CD8-positive, alpha-beta T cell (primary cell): ENCODE measurements at regions of chr6 and their contacts with region 1.

Region 1: GRCh38 chr6:114785235-114786127 is 442.7 kb upstream of the HS3ST5 start:
- DNase-seq: no peak
- ATAC-seq: no peak
- H3K4me3 ChIP-seq: no peak overlapping the region
- H3K4me3 Mint-ChIP-seq: no peak overlapping the region
- H3K27ac ChIP-seq: no peak overlapping the region
- H3K27ac Mint-ChIP-seq: no peak overlapping the region
- H3K4me1 ChIP-seq: no peaks in the 10 kb centered on the region
- H3K4me1 Mint-ChIP-seq: no peaks in the 10 kb centered on the region
- H3K27me3 ChIP-seq: no peaks in the 10 kb centered on the region
- H3K27me3 Mint-ChIP-seq: no peaks in the 10 kb centered on the region
- CTCF ChIP-seq: no peak

Region 2: DNA sequence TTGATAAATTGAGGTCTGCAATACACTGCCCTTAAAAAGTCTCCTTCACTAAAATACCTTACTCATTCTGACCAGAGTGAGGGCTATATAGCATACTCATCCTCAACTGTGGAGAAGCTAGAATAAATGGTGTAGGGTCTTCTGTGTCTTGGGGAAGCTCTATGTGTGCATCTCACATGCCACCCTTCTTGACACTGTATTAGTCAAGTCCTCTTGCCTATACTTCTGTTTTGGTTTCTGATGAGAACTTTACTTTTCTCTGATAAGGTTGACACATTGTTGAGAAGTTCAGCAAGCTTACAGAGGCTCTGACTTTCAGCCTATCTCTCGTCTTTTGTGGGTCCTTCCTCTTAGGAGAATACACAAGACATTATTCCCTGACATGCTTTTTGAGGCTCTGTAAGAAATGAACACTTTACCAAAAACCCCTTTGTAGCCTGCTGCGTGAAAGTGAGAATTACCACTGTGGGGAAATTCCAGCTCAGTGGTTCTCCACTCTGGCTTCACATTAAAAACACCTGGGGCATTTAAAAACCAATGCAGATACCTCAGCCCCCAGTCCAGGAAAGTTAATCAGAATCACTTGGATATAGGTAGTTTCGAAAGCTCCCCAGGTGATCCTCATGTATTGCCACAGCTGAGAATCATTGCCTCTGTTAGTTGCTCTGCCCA is 70.5 kb before region 1 on chr6:
- CTCF ChIA-PET with region 1: no interaction called
- POLR2A ChIA-PET with region 1: no interaction called
- intact Hi-C with region 1: no loop called
- DNase-seq: no peak
- ATAC-seq: no peak
- H3K4me3 ChIP-seq: no peak overlapping the region
- H3K4me3 Mint-ChIP-seq: no peak overlapping the region
- H3K27ac ChIP-seq: no peak overlapping the region
- H3K27ac Mint-ChIP-seq: no peak overlapping the region
- H3K4me1 ChIP-seq: no peaks in the 10 kb centered on the region
- H3K4me1 Mint-ChIP-seq: no peaks in the 10 kb centered on the region
- H3K27me3 ChIP-seq: no peaks in the 10 kb centered on the region
- H3K27me3 Mint-ChIP-seq: no peaks in the 10 kb centered on the region
- CTCF ChIP-seq: no peak

Region 3: DNA sequence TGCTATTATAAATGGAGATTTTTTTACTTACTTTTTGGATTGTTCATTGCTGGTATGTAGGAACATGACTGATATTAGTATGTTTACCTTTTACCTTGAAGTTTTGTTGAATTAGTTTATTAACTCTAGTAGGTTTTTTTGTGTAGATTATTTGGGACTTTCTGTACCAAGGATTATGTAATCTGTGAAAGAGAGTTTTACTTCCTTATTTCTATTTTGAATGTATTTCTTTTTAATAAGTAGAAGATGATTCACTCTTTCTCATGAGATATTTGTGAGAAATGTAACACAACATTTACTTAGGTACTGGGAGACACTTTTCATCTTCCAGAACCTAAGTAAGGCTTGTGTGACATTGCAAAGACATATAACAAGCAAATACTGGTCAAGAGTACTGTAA is 31.2 kb after region 1 on chr6:
- CTCF ChIA-PET with region 1: no interaction called
- POLR2A ChIA-PET with region 1: no interaction called
- intact Hi-C with region 1: loop called in 1 of 2 experiments (anchors 1 kb)
- DNase-seq: no peak
- ATAC-seq: no peak
- H3K4me3 ChIP-seq: no peak overlapping the region
- H3K4me3 Mint-ChIP-seq: no peak overlapping the region
- H3K27ac ChIP-seq: no peak overlapping the region
- H3K27ac Mint-ChIP-seq: no peak overlapping the region
- H3K4me1 ChIP-seq: no peaks in the 10 kb centered on the region
- H3K4me1 Mint-ChIP-seq: no peaks in the 10 kb centered on the region
- H3K27me3 ChIP-seq: no peaks in the 10 kb centered on the region
- H3K27me3 Mint-ChIP-seq: no peaks in the 10 kb centered on the region
- CTCF ChIP-seq: no peak